GM23248 (cell line): ENCODE measurements at regions of chr20 and their contacts with region 1.

Region 1: DNA sequence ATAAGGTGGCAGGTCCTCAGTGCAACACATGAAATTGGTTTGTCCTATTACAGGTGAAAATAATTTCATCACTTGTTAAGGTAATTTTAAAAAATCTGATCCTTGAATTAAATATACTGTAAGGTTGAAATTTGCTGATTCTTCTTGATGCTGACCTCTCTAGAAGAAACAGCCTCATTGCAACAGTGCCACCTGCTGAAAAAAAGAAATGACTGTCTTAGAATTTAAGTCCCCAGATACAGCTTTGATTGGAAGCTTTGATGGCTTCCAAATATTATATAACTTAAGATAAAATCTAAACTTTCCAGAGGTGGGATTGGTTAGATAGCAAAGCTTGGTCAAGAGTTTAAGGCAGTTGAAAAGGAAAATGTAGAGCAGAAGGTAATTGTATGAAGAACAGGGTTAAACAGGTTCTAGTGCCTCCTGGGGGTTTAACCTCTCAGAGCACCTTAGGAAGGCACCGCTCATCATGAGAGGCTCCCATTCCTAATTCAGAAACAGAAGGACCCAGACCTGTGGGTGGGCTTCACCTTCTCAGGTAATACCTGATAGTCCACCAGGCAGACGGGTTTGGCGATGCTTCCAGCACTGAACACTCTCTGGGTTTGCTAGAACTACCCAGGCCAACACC is 401.0 kb downstream of the PAX1 start:
- DNase-seq: peak; percentile 61
- H3K4me3 ChIP-seq: no peak overlapping the region
- H3K27ac ChIP-seq: no peak overlapping the region
- H3K4me1 ChIP-seq: no peaks in the 10 kb centered on the region
- H3K27me3 ChIP-seq: no peaks in the 10 kb centered on the region

Region 2: DNA sequence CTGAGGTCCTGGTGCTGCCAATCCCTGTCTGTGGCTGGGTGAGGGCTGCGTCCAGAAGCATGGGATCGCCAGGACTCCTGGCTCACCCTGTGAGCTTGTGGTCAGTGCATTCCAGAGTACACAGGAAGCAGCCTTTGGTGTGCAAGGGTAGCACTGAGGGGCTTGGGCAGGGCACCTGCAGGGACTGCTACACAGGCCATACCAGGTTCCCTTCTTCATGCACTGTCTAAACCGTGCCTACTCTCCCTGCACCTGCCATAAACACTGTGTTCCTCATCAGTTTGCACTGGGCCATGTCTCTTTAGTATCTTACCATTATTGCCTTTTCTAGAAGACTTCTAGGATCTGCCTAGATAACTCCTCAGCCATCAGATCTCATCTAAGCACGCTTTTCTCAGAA is 519.7 kb before region 1 on chr20:
- in situ Hi-C with region 1: no loop called
- DNase-seq: no peak
- H3K4me3 ChIP-seq: no peak overlapping the region
- H3K27ac ChIP-seq: no peak overlapping the region
- H3K4me1 ChIP-seq: no peaks in the 10 kb centered on the region
- H3K27me3 ChIP-seq: no peaks in the 10 kb centered on the region; the same call in 1 of the 2 replicates

Region 3: GRCh38 chr20:21719592-21720214 is 386.7 kb before region 1 on chr20:
- in situ Hi-C with region 1: loop called (anchors 25 kb)
- DNase-seq: peak; percentile 51
- H3K4me3 ChIP-seq: no peak overlapping the region
- H3K27ac ChIP-seq: no peak overlapping the region
- H3K4me1 ChIP-seq: no peaks in the 10 kb centered on the region
- H3K27me3 ChIP-seq: peaks cover 4% of the 10 kb centered on the region; the same call in 1 of the 2 replicates